Sigmoid colon (tissue), 7 donors: ENCODE measurements at regions of chr6 and their contacts with region 1.

Region 1: GRCh38 chr6:158819213-158819909 is at the start of gene EZR:
- DNase-seq: peak; percentile 86
- H3K4me3 ChIP-seq: peak within 1 kb of the TSS; percentile 74 to 97 (median 81)
- H3K27ac ChIP-seq: peak within 1 kb of the TSS; percentile 95 to 99 (median 96)
- H3K4me1 ChIP-seq: peaks cover 0 to 32% (median 24%) of the 10 kb centered on the region in 4 donors
- H3K27me3 ChIP-seq: no peaks in the 10 kb centered on the region
- CTCF ChIP-seq: no peak
- EP300 ChIP-seq: no peak
- POLR2A ChIP-seq: no peak
- total RNA-seq, gene EZR: 33.5 to 46.0 (median 38.3) TPM

Region 2: GRCh38 chr6:158460602-158461169 is 358.7 kb before region 1 on chr6:
- intact Hi-C with region 1: no loop called
- DNase-seq: no peak
- H3K4me3 ChIP-seq: no peak overlapping the region
- H3K27ac ChIP-seq: no peak overlapping the region
- H3K4me1 ChIP-seq: no peaks in the 10 kb centered on the region
- H3K27me3 ChIP-seq: no peaks in the 10 kb centered on the region
- CTCF ChIP-seq: no peak
- EP300 ChIP-seq: no peak
- POLR2A ChIP-seq: no peak

Region 3: GRCh38 chr6:158869826-158870648 is 50.7 kb after region 1 on chr6:
- intact Hi-C with region 1: loop called (anchors 1 kb)
- DNase-seq: peak; percentile 91
- H3K4me3 ChIP-seq: peak overlapping the region; percentile 25 to 51 (median 46)
- H3K27ac ChIP-seq: peak overlapping the region; percentile 76 to 84 (median 78)
- H3K4me1 ChIP-seq: peaks cover 0 to 15% (median 2%) of the 10 kb centered on the region in 4 donors
- H3K27me3 ChIP-seq: no peaks in the 10 kb centered on the region
- CTCF ChIP-seq: no peak
- EP300 ChIP-seq: no peak
- POLR2A ChIP-seq: no peak

Region 4: DNA sequence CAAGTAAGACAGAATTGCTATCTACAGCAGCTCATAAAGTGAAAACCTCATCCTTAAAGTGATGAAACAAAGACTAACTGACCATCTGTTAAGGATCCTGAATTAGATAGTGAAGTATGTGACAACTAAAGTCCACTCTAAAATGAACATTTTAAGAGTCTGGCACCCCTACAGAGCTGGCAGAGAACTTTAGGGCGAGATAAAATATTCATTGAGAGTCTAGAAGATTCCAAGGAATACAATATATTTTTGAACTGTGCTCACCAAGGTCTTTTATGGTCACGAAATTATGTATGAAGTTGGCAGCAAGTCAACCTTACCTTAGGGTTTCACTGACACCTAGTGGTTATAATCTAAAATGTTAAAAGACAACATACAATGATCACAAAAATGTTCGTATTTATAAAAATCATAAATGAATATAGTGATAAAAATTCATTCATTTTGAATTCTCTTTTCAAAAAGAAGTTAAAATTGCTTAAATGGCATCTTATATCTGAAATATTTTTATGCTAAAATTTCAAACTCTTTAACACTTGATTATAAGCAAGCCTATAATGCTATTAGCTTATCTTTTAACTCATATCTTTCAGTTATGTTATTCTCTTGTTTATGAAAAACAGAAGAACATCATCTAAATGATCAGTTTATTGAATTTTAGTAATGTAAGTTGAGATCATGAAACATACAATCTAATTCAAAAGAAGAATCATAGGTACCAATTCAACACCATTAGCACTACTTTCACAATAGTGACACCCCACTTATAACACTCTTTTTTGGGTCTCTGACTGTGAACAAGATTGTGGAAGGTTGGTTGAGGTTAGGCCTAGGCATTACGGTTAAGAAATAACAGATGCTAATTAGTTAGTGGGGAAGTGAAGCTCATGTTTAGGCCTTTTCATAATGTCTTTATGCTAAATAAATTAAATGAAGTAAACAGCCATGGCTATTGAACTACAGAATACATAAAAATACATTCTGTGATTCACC is 153.2 kb after region 1 on chr6:
- intact Hi-C with region 1: loop called (anchors 5 kb)
- DNase-seq: no peak
- H3K4me3 ChIP-seq: no peak overlapping the region
- H3K27ac ChIP-seq: no peak overlapping the region
- H3K4me1 ChIP-seq: peaks cover 0 to 5% (median 0%) of the 10 kb centered on the region in 4 donors
- H3K27me3 ChIP-seq: no peaks in the 10 kb centered on the region
- CTCF ChIP-seq: peak; percentile 26 to 55 (median 43)
- EP300 ChIP-seq: no peak
- POLR2A ChIP-seq: no peak

Region 5: GRCh38 chr6:158999666-159000403 is 180.5 kb after region 1 on chr6 and contains the start of gene RSPH3:
- intact Hi-C with region 1: loop called (anchors 2 kb)
- DNase-seq: peak; percentile 96
- H3K4me3 ChIP-seq: peak within 1 kb of the TSS; percentile 55 to 77 (median 66)
- H3K27ac ChIP-seq: peak within 1 kb of the TSS; percentile 78 to 87 (median 82)
- H3K4me1 ChIP-seq: peaks cover 0 to 16% (median 8%) of the 10 kb centered on the region in 4 donors
- H3K27me3 ChIP-seq: no peaks in the 10 kb centered on the region
- CTCF ChIP-seq: peak in 1 of 4 experiments; percentile 16
- EP300 ChIP-seq: no peak
- POLR2A ChIP-seq: peak in 1 of 2 donors; percentile 68
- total RNA-seq, gene RSPH3: 8.1 to 13.6 (median 9.6) TPM

Region 6: GRCh38 chr6:159017757-159018559 is 198.6 kb after region 1 on chr6:
- intact Hi-C with region 1: no loop called
- DNase-seq: no peak
- H3K4me3 ChIP-seq: no peak overlapping the region
- H3K27ac ChIP-seq: no peak overlapping the region
- H3K4me1 ChIP-seq: no peaks in the 10 kb centered on the region
- H3K27me3 ChIP-seq: no peaks in the 10 kb centered on the region
- CTCF ChIP-seq: no peak
- EP300 ChIP-seq: no peak
- POLR2A ChIP-seq: no peak